SK-N-SH (cell line): ENCODE measurements at regions of chr3 and their contacts with region 1.

Region 1: GRCh38 chr3:107117922-107118536 is 259.2 kb upstream of the CCDC54 start:
- DNase-seq: peak; percentile 70
- H3K4me3 ChIP-seq: no peak overlapping the region; a peak in 1 of 4 replicates
- H3K27ac ChIP-seq: no peak overlapping the region
- H3K4me1 ChIP-seq: peaks cover 0 to 4% of the 10 kb centered on the region in 2 experiments; a peak in 2 of 4 replicates
- H3K27me3 ChIP-seq: no peaks in the 10 kb centered on the region
- CTCF ChIP-seq: peak; percentile 78
- EP300 ChIP-seq: no peak
- RAD21 ChIP-seq: peak; percentile 87

Region 2: GRCh38 chr3:107106316-107106715 is 11.7 kb before region 1 on chr3:
- CTCF ChIA-PET with region 1: interaction called, 15 read pairs
- POLR2A ChIA-PET with region 1: no interaction called
- DNase-seq: no peak
- H3K4me3 ChIP-seq: no peak overlapping the region
- H3K27ac ChIP-seq: no peak overlapping the region; a peak in 1 of 4 replicates
- H3K4me1 ChIP-seq: no peaks in the 10 kb centered on the region
- H3K27me3 ChIP-seq: no peaks in the 10 kb centered on the region
- CTCF ChIP-seq: no peak
- EP300 ChIP-seq: no peak
- RAD21 ChIP-seq: no peak